Heart right ventricle (tissue), 16 donors: ENCODE measurements at regions of chr1 and their contacts with region 1.

Region 1: GRCh38 chr1:174726167-174726879 is 273.4 kb upstream of the CACYBP start:
- DNase-seq: no peak
- ATAC-seq: no peak
- H3K4me3 ChIP-seq: no peak overlapping the region
- H3K27ac ChIP-seq: no peak overlapping the region
- H3K4me1 ChIP-seq: peaks cover 0 to 2% (median 0%) of the 10 kb centered on the region in 9 donors
- H3K27me3 ChIP-seq: no peaks in the 10 kb centered on the region
- CTCF ChIP-seq: peak in 8 of 9 donors; percentile 27 to 73 (median 61)

Region 2: GRCh38 chr1:174262349-174263241 is 463.7 kb before region 1 on chr1:
- intact Hi-C with region 1: loop called in 5 of 10 experiments (anchors 5 kb)
- DNase-seq: no peak
- ATAC-seq: peak in 7 of 8 donors; percentile 47 to 77 (median 53)
- H3K4me3 ChIP-seq: no peak overlapping the region
- H3K27ac ChIP-seq: peak overlapping the region in 4 of 10 donors; percentile 4 to 33 (median 10)
- H3K4me1 ChIP-seq: peaks cover 0 to 21% (median 6%) of the 10 kb centered on the region in 9 donors
- H3K27me3 ChIP-seq: no peaks in the 10 kb centered on the region
- CTCF ChIP-seq: peak; percentile 44 to 77 (median 68)

Region 3: GRCh38 chr1:174413632-174414031 is 312.7 kb before region 1 on chr1:
- intact Hi-C with region 1: loop called in 1 of 10 experiments (anchors 10 kb)
- DNase-seq: no peak
- ATAC-seq: peak in 3 of 8 donors; percentile 14 to 39 (median 20)
- H3K4me3 ChIP-seq: peak overlapping the region in 1 of 10 donors; percentile 20
- H3K27ac ChIP-seq: no peak overlapping the region
- H3K4me1 ChIP-seq: peaks cover 0 to 10% (median 0%) of the 10 kb centered on the region in 9 donors
- H3K27me3 ChIP-seq: no peaks in the 10 kb centered on the region
- CTCF ChIP-seq: peak in 6 of 9 donors; percentile 31 to 46 (median 35)

Region 4: DNA sequence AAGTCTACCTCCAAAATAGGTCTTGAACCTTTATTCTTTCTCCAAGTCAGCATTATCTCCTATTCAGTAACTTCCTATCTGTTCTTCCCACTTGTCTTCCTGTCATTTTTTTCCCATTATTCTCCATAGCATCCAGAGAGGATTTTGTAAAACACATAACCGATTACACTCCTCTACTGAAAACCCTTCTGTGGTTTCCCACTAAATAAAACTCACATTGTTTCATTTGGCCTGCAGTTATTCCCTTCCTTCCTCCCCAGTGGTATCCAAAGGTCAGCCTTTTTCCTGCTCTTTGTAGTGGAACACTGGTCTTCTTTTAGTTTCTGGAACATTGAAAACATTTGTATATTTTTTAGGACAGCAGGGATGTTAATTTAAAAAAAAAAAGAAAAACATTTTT is 12.5 kb before region 1 on chr1:
- intact Hi-C with region 1: no loop called
- DNase-seq: no peak
- ATAC-seq: peak in 7 of 8 donors; percentile 38 to 92 (median 79)
- H3K4me3 ChIP-seq: no peak overlapping the region
- H3K27ac ChIP-seq: peak overlapping the region in 7 of 10 donors; percentile 2 to 78 (median 54)
- H3K4me1 ChIP-seq: peaks cover 0 to 26% (median 12%) of the 10 kb centered on the region in 9 donors
- H3K27me3 ChIP-seq: no peaks in the 10 kb centered on the region
- CTCF ChIP-seq: no peak